ENCODE measurements at regions of chrX and their contacts with region 1.

Region 1: DNA sequence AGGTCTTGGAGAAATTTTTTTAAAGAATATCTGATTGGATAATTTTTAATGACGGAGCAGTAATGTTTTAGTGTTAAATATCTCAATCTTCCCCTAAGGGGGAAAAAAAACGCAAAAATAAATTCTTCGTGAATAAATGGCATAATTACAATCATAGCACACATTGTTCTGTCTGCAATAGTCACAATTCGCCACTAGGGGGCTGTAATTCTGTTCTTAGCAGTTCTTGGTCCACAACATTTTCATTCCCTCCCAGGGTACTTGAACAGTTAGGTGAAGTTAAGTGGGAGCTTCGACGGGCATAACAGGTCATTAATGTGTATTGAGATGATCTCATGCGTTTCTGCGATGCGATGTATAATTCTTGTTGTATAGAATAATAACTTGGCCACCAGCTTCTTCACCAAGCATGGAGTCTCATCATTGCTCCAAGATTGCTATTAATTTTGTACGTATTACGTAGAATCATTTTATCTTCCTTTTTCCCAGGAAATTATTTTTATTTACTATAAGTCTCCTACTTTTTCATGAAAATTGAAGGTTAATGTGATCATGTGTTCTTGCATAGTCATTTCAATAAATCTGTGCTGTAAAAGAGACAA is 27.2 kb downstream of the HTR2C start:
- DNase-seq: peak; percentile 32
- ATAC-seq: no peak
- H3K4me3 Mint-ChIP-seq: no peak overlapping the region
- H3K27ac Mint-ChIP-seq: no peak overlapping the region
- H3K4me1 Mint-ChIP-seq: no peaks in the 10 kb centered on the region
- H3K27me3 Mint-ChIP-seq: no peaks in the 10 kb centered on the region

Region 2: DNA sequence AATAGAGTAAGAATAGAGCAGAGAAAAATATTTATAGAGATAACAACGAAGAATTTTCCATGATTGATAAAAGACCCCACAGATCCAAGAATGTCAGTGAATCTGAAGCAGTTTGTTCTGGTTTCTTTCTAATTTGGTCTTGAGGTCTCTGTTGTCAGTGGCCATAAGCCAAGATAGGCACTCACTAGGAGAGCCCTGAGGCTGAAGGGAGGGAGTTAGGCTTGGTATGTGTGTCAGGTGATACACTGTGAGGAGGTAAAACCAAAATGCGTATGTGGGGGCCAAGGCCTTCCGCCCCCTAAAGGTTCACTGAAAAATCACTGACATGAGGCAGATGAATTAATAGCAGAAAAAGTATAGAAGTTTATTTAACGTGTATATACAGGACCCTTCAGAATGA is 409.5 kb before region 1 on chrX:
- CTCF ChIA-PET with region 1: no interaction called
- POLR2A ChIA-PET with region 1: no interaction called
- intact Hi-C with region 1: no loop called
- DNase-seq: no peak
- ATAC-seq: no peak
- H3K4me3 Mint-ChIP-seq: no peak overlapping the region
- H3K27ac Mint-ChIP-seq: no peak overlapping the region
- H3K4me1 Mint-ChIP-seq: no peaks in the 10 kb centered on the region
- H3K27me3 Mint-ChIP-seq: no peaks in the 10 kb centered on the region

Region 3: GRCh38 chrX:114519524-114519923 is 91.6 kb before region 1 on chrX:
- CTCF ChIA-PET with region 1: no interaction called
- POLR2A ChIA-PET with region 1: no interaction called
- intact Hi-C with region 1: no loop called
- DNase-seq: no peak
- ATAC-seq: no peak
- H3K4me3 Mint-ChIP-seq: no peak overlapping the region
- H3K27ac Mint-ChIP-seq: no peak overlapping the region
- H3K4me1 Mint-ChIP-seq: no peaks in the 10 kb centered on the region
- H3K27me3 Mint-ChIP-seq: no peaks in the 10 kb centered on the region

Region 4: DNA sequence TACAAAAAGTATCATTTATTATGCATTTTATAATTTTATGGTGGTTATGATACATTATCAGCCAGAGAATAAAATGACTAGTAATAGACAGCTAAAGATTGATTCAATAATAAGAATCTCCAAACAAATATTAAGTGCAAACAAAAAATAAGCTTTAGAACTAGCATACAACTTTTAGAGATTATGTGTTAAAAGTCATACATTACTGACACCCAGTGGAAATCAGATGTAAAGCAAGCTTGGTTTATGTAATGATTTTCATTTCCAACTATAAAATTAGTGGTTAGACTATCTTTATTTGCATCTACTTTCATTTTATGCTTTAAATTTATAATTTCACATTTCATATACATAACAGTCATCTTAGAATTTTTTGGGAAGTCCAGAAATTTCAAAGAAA is 348.6 kb after region 1 on chrX:
- CTCF ChIA-PET with region 1: no interaction called
- POLR2A ChIA-PET with region 1: no interaction called
- intact Hi-C with region 1: loop called in 1 of 2 experiments (anchors 5 kb)
- DNase-seq: no peak
- ATAC-seq: no peak
- H3K4me3 Mint-ChIP-seq: no peak overlapping the region
- H3K27ac Mint-ChIP-seq: no peak overlapping the region
- H3K4me1 Mint-ChIP-seq: no peaks in the 10 kb centered on the region
- H3K27me3 Mint-ChIP-seq: no peaks in the 10 kb centered on the region

Region 5: GRCh38 chrX:115147220-115147619 is 536.1 kb after region 1 on chrX:
- CTCF ChIA-PET with region 1: no interaction called
- POLR2A ChIA-PET with region 1: no interaction called
- intact Hi-C with region 1: loop called in 1 of 2 experiments (anchors 5 kb)
- DNase-seq: no peak
- ATAC-seq: no peak
- H3K4me3 Mint-ChIP-seq: no peak overlapping the region
- H3K27ac Mint-ChIP-seq: no peak overlapping the region
- H3K4me1 Mint-ChIP-seq: no peaks in the 10 kb centered on the region
- H3K27me3 Mint-ChIP-seq: no peaks in the 10 kb centered on the region